Mammary epithelial cell (primary cell): ENCODE measurements at regions of chr3 and their contacts with region 1.

Region 1: DNA sequence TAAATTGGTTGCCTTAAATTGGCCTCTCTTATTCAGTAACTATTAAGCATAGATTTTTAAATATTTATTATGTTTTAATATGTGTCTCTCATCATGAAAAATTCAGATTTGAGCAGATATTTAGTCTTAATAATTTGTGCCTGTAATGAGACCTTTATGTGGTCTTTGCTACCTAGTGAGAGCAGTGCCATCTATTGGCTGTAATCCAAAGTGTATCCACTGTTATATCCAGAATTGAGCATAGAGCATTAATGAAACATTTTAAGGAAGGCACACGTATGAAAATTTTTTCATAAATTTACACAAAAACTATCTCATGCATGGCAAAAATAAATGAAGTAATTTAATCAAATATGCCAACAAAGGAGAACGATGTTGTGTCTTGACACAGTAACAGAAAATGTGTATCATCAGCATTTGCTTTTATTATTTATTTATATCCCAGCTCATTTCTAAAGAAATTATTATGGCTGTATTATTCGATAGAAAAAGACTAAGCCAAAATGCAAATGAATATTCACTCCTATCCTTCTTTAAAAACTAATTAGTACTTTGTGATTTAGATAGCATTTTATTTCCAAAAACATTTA is 203.5 kb downstream of the RSRC1 start:
- DNase-seq: peak; percentile 32
- H3K4me3 ChIP-seq: no peak overlapping the region
- H3K27ac ChIP-seq: no peak overlapping the region
- H3K4me1 ChIP-seq: no peaks in the 10 kb centered on the region
- H3K27me3 ChIP-seq: no peaks in the 10 kb centered on the region
- CTCF ChIP-seq: peak; percentile 49 to 60

Region 2: GRCh38 chr3:157618075-157618760 is 695.2 kb before region 1 on chr3:
- CTCF ChIA-PET with region 1: no interaction called
- dilution Hi-C with region 1: no loop called
- in situ Hi-C with region 1: no loop called
- intact Hi-C with region 1: loop called (anchors 2 kb)
- DNase-seq: peak; percentile 79
- H3K4me3 ChIP-seq: no peak overlapping the region
- H3K27ac ChIP-seq: no peak overlapping the region
- H3K4me1 ChIP-seq: peaks cover 4% of the 10 kb centered on the region
- H3K27me3 ChIP-seq: no peaks in the 10 kb centered on the region
- CTCF ChIP-seq: peak; percentile 57 to 61

Region 3: GRCh38 chr3:157865352-157866000 is 448.0 kb before region 1 on chr3:
- CTCF ChIA-PET with region 1: no interaction called
- dilution Hi-C with region 1: no loop called
- in situ Hi-C with region 1: no loop called
- intact Hi-C with region 1: loop called (anchors 1 kb)
- DNase-seq: peak; percentile 8
- H3K4me3 ChIP-seq: no peak overlapping the region
- H3K27ac ChIP-seq: no peak overlapping the region
- H3K4me1 ChIP-seq: no peaks in the 10 kb centered on the region
- H3K27me3 ChIP-seq: no peaks in the 10 kb centered on the region
- CTCF ChIP-seq: peak; percentile 72 to 76

Region 4: DNA sequence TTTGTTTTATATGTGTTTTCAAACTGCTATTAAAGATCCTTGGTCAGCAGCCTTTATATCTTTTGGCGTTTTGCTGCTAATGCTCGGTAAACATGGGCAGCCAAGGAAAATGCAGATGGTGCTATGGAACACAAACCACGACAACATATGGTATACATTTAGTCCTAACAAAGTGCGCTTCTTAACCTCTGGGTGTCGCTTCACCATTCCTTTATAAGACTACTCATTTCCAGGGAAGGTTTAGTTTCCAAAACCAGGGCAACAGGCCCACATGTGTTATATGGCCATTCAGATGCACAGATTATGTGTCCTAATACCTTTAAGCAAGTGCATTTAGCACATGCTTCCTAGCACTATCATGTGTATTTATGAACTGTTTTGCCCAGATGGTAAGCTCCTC is 221.9 kb before region 1 on chr3:
- CTCF ChIA-PET with region 1: no interaction called
- dilution Hi-C with region 1: no loop called
- in situ Hi-C with region 1: loop called in 1 of 2 experiments (anchors 10 kb)
- intact Hi-C with region 1: loop called (anchors 1 kb)
- DNase-seq: peak; percentile 35
- H3K4me3 ChIP-seq: no peak overlapping the region
- H3K27ac ChIP-seq: no peak overlapping the region
- H3K4me1 ChIP-seq: no peaks in the 10 kb centered on the region
- H3K27me3 ChIP-seq: peaks cover 27% of the 10 kb centered on the region
- CTCF ChIP-seq: peak; percentile 32 to 57

Region 5: DNA sequence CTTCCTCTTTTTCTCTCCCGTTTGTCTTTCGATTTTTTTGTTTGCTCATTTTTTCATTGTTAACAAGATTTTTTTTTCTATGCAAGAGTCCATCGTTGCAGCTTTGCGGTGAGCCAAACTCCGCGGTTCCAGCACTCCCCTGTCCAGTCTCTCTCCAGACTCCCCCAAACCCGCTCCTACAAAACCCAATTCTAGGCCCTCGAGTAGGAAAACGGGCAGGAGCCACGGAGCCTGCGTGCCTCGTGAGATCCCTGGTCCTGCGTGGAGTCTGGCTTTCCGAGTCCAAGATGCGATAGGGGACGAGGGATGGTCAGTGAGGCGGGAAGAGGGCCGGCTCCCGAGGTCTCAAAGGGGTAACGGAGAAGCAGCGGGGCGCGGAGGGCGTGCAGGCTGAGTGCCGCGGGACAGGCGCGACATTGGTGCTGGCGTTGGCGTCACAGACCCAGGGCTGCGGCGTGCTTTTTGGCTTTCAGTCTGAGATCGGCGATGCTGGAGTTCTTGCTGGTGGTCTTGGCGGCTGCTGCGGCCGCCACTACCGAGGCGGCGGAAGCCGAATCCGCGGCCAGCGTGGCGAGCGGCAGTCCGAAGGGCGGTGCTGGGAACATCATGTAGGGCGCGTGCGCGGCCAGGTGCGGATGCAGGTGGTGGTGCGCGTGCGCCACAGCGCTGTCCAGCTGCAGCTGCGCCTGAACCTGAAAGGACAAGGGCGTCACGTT is 215.7 kb before region 1 on chr3:
- CTCF ChIA-PET with region 1: no interaction called
- dilution Hi-C with region 1: no loop called
- in situ Hi-C with region 1: loop called in 1 of 2 experiments (anchors 10 kb)
- intact Hi-C with region 1: no loop called
- DNase-seq: peak; percentile 80
- H3K4me3 ChIP-seq: peak overlapping the region; percentile 47 to 84 (median 68)
- H3K27ac ChIP-seq: no peak overlapping the region
- H3K4me1 ChIP-seq: peaks cover 6% of the 10 kb centered on the region
- H3K27me3 ChIP-seq: peaks cover 58% of the 10 kb centered on the region
- CTCF ChIP-seq: no peak